Activated CD8-positive, alpha-beta T cell treated with anti-CD3 and anti-CD28 coated beads for 36 hours (primary cell): ENCODE measurements at regions of chr11 and their contacts with region 1.

Region 1: DNA sequence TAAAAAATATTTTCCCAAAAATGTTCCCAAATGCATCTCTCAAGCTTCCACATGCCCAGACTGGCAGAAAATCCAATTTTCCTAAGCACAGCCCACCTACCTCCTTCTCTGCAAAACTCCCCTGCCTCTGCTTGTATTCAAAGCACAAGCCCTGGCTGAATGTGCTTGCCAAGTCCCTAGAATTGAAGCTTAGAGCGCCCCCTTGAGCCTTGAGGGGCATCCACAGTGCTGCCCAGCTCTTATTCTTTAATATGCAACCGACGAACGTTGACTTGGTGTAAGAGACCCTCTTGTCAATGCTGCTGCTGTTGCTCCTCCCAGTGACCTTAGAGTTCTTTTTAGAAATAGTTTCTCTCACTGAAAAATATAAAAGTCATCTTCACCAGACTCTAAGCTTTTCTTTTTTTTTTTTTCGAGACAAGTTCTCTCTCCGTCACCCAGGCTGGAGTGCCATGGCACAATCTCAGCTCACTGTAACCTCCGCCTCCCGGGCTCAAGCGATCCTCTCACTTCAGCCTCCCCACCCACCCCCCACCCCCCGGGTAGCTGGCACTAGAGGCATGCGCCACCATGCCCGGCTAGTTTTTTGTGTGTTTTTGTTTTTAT is 63.5 kb upstream of the CAPRIN1 start:
- DNase-seq: peak; percentile 87
- ATAC-seq: peak; percentile 84
- H3K4me3 Mint-ChIP-seq: no peak overlapping the region
- H3K27ac Mint-ChIP-seq: no peak overlapping the region
- H3K4me1 Mint-ChIP-seq: peaks cover 5% of the 10 kb centered on the region
- H3K27me3 Mint-ChIP-seq: peaks cover 7% of the 10 kb centered on the region
- CTCF ChIP-seq: peak; percentile 91

Region 2: GRCh38 chr11:33736148-33736809 is 251.8 kb before region 1 on chr11 and contains the start of gene CD59:
- CTCF ChIA-PET with region 1: no interaction called
- POLR2A ChIA-PET with region 1: no interaction called
- intact Hi-C with region 1: no loop called
- DNase-seq: peak; percentile 90
- ATAC-seq: peak; percentile 68
- H3K4me3 Mint-ChIP-seq: peak within 1 kb of the TSS; percentile 81
- H3K27ac Mint-ChIP-seq: peak within 1 kb of the TSS; percentile 80
- H3K4me1 Mint-ChIP-seq: peaks cover 36% of the 10 kb centered on the region
- H3K27me3 Mint-ChIP-seq: peaks cover 3% of the 10 kb centered on the region
- CTCF ChIP-seq: no peak
- total RNA-seq, gene CD59: 36.0 to 36.1 TPM

Region 3: GRCh38 chr11:33808228-33808828 is 179.8 kb before region 1 on chr11:
- CTCF ChIA-PET with region 1: interaction called, 21 read pairs
- POLR2A ChIA-PET with region 1: no interaction called
- intact Hi-C with region 1: no loop called
- DNase-seq: peak; percentile 92
- ATAC-seq: peak; percentile 92
- H3K4me3 Mint-ChIP-seq: no peak overlapping the region
- H3K27ac Mint-ChIP-seq: no peak overlapping the region
- H3K4me1 Mint-ChIP-seq: peaks cover 2% of the 10 kb centered on the region
- H3K27me3 Mint-ChIP-seq: peaks cover 9% of the 10 kb centered on the region
- CTCF ChIP-seq: peak; percentile 88

Region 4: DNA sequence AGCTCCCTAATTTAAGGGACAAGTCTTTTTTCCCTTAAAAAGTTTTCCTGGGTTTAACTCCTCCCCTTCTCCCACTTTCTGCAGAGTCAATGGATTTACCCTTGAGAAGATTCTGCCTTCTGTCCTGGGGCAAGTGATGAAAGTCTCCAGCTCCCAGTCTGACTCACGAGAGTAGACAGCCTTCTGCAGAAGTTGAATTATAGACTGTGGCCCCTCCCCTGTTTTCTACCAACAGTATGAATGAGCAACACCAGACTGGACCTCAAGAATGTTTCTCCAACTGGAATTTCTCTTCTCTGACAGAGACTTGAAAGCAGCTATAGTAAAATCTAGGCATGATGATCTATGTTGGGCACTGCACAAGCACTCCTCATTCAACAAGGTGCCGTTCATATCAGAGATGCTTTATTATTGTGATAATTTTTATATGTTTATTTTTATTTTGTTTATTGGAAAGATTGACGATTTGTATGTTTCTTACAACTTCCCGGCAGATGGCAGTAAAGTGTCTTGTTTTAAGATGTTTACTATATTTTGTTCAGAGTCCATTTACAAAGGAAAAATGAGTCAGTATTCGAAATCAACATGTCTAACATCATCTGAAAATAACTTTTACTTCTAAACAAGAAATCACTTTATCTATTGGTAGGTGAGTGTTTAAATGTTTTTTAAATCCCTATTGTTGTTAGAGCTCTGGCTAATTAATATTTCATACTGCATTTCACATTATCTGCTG is 152.8 kb before region 1 on chr11:
- CTCF ChIA-PET with region 1: interaction called, 18 read pairs
- POLR2A ChIA-PET with region 1: no interaction called
- intact Hi-C with region 1: no loop called
- DNase-seq: no peak
- ATAC-seq: no peak
- H3K4me3 Mint-ChIP-seq: no peak overlapping the region
- H3K27ac Mint-ChIP-seq: no peak overlapping the region
- H3K4me1 Mint-ChIP-seq: no peaks in the 10 kb centered on the region
- H3K27me3 Mint-ChIP-seq: peaks cover 25% of the 10 kb centered on the region
- CTCF ChIP-seq: no peak

Region 5: DNA sequence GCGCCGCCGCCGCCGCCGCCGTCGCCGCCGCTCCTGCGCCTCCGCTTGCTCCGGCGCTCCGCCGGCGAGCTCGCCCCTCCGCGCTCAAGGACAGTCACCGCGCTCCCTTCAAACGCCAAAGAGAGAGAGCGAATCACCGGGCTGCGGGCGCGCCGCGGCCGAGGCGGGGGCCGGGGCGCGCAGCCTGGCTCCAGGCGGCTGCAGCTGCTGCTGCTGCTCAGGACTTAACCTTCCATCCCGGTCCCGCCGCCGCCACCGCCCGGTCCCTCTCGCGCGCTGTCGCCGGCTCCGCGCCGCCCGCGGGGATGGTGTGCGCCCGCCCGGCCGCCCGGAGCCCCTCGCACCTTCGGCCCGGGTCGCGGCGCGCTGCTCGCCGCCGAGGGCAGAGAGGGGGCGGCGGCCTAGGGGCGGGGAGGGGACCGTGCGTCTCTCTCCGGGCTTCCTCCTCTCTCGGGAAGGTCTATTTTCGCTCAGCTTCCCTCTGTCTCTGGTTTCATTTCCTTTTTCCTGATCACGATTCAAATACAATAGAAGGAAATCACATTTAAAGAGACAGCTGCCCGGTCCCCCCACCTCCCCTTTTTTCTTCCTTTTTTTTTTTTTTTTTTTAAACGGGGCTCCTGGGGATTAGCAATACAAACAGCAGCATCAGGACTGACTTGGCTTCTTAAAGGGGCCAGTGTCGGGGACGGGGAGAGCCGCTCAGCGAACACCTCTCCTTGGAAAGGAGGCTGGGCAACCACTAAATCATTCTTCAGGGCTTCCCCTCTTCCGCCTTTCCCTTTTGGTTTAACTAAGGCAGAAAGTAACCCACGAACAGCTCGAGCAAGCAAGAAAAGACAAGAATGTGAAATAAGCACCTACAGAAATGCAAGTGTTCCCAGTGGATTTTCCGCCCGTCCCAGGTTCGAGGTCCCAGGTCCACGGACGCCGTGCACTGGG is 118.3 kb before region 1 on chr11:
- CTCF ChIA-PET with region 1: interaction called, 14 read pairs
- POLR2A ChIA-PET with region 1: no interaction called
- intact Hi-C with region 1: no loop called
- DNase-seq: peak; percentile 23
- ATAC-seq: peak; percentile 72
- H3K4me3 Mint-ChIP-seq: peak overlapping the region; percentile 71
- H3K27ac Mint-ChIP-seq: no peak overlapping the region
- H3K4me1 Mint-ChIP-seq: peaks cover 13% of the 10 kb centered on the region
- H3K27me3 Mint-ChIP-seq: peaks cover 62% of the 10 kb centered on the region
- CTCF ChIP-seq: no peak

Region 6: GRCh38 chr11:33976495-33977199 is 11.4 kb before region 1 on chr11:
- CTCF ChIA-PET with region 1: interaction called, 29 read pairs
- POLR2A ChIA-PET with region 1: no interaction called
- intact Hi-C with region 1: no loop called
- DNase-seq: no peak
- ATAC-seq: no peak
- H3K4me3 Mint-ChIP-seq: no peak overlapping the region
- H3K27ac Mint-ChIP-seq: no peak overlapping the region
- H3K4me1 Mint-ChIP-seq: no peaks in the 10 kb centered on the region
- H3K27me3 Mint-ChIP-seq: peaks cover 5% of the 10 kb centered on the region
- CTCF ChIP-seq: no peak

Region 7: GRCh38 chr11:34037016-34037415 is 48.9 kb after region 1 on chr11:
- CTCF ChIA-PET with region 1: no interaction called
- POLR2A ChIA-PET with region 1: no interaction called
- intact Hi-C with region 1: no loop called
- DNase-seq: no peak
- ATAC-seq: no peak
- H3K4me3 Mint-ChIP-seq: no peak overlapping the region
- H3K27ac Mint-ChIP-seq: no peak overlapping the region
- H3K4me1 Mint-ChIP-seq: no peaks in the 10 kb centered on the region
- H3K27me3 Mint-ChIP-seq: peaks cover 2% of the 10 kb centered on the region
- CTCF ChIP-seq: no peak